ENCODE measurements at regions of chr7 and their contacts with region 1.

Region 1: GRCh38 chr7:106153891-106154449 is 41.9 kb upstream of the SYPL1 start:
- DNase-seq: peak; percentile 86
- H3K4me3 ChIP-seq: no peak overlapping the region; a peak in 1 of 4 replicates
- H3K27ac ChIP-seq: no peak overlapping the region
- H3K4me1 ChIP-seq: peaks cover 10 to 19% of the 10 kb centered on the region in 2 experiments; a peak in 2 of 4 replicates
- H3K27me3 ChIP-seq: no peaks in the 10 kb centered on the region; the same call in 1 of the 2 replicates
- CTCF ChIP-seq: peak; percentile 100
- EP300 ChIP-seq: no peak
- RAD21 ChIP-seq: peak; percentile 100

Region 2: GRCh38 chr7:105581066-105581842 is 572.7 kb before region 1 on chr7 and contains the start of gene EFCAB10:
- CTCF ChIA-PET with region 1: no interaction called
- POLR2A ChIA-PET with region 1: no interaction called
- DNase-seq: peak; percentile 98
- H3K4me3 ChIP-seq: peak within 1 kb of the TSS; percentile 55 to 61
- H3K27ac ChIP-seq: peak within 1 kb of the TSS in 1 of 2 experiments; percentile 56; a peak in 1 of 4 replicates
- H3K4me1 ChIP-seq: no peaks in the 10 kb centered on the region; a peak in 1 of 4 replicates
- H3K27me3 ChIP-seq: no peaks in the 10 kb centered on the region
- CTCF ChIP-seq: peak; percentile 27
- EP300 ChIP-seq: no peak
- RAD21 ChIP-seq: no peak
- polyA plus RNA-seq, gene EFCAB10: 0.51 and 0.80 TPM in 2 replicates

Region 3: GRCh38 chr7:106064771-106065585 is 89.0 kb before region 1 on chr7:
- CTCF ChIA-PET with region 1: interaction called, 593 read pairs
- POLR2A ChIA-PET with region 1: no interaction called
- DNase-seq: peak; percentile 82
- H3K4me3 ChIP-seq: peak overlapping the region; percentile 6 to 55; a peak in 3 of 4 replicates
- H3K27ac ChIP-seq: peak overlapping the region; percentile 87 to 88
- H3K4me1 ChIP-seq: peaks cover 28 to 60% of the 10 kb centered on the region in 2 experiments
- H3K27me3 ChIP-seq: no peaks in the 10 kb centered on the region
- CTCF ChIP-seq: peak; percentile 25; the same call in 1 of the 2 replicates
- EP300 ChIP-seq: peak in 1 of 2 experiments; percentile 59; a peak in 1 of 4 replicates
- RAD21 ChIP-seq: peak; percentile 27; the same call in 1 of the 2 replicates

Region 4: GRCh38 chr7:106082087-106082854 is 71.7 kb before region 1 on chr7:
- CTCF ChIA-PET with region 1: interaction called, 13 read pairs
- POLR2A ChIA-PET with region 1: no interaction called
- DNase-seq: no peak
- H3K4me3 ChIP-seq: no peak overlapping the region
- H3K27ac ChIP-seq: no peak overlapping the region
- H3K4me1 ChIP-seq: no peaks in the 10 kb centered on the region; a peak in 1 of 4 replicates
- H3K27me3 ChIP-seq: no peaks in the 10 kb centered on the region
- CTCF ChIP-seq: no peak
- EP300 ChIP-seq: no peak
- RAD21 ChIP-seq: no peak

Region 5: GRCh38 chr7:106112117-106112971 is 41.6 kb before region 1 on chr7 and contains the start of gene SYPL1:
- CTCF ChIA-PET with region 1: interaction called, 36 read pairs
- POLR2A ChIA-PET with region 1: interaction called, 6 read pairs
- DNase-seq: peak; percentile 99
- H3K4me3 ChIP-seq: peak within 1 kb of the TSS; percentile 80 to 91
- H3K27ac ChIP-seq: peak within 1 kb of the TSS; percentile 91 to 95
- H3K4me1 ChIP-seq: peaks cover 14 to 21% of the 10 kb centered on the region in 2 experiments; a peak in 3 of 4 replicates
- H3K27me3 ChIP-seq: no peaks in the 10 kb centered on the region
- CTCF ChIP-seq: peak; percentile 39
- EP300 ChIP-seq: no peak; a peak in 1 of 4 replicates
- RAD21 ChIP-seq: peak; percentile 9; the same call in 1 of the 2 replicates
- polyA plus RNA-seq, gene SYPL1: 72.4 and 98.7 TPM in 2 replicates

Region 6: GRCh38 chr7:106139265-106140251 is 14.4 kb before region 1 on chr7:
- CTCF ChIA-PET with region 1: interaction called, 24 read pairs
- POLR2A ChIA-PET with region 1: no interaction called
- DNase-seq: no peak
- H3K4me3 ChIP-seq: no peak overlapping the region
- H3K27ac ChIP-seq: no peak overlapping the region
- H3K4me1 ChIP-seq: peaks cover 0 to 7% of the 10 kb centered on the region in 2 experiments; a peak in 2 of 4 replicates
- H3K27me3 ChIP-seq: no peaks in the 10 kb centered on the region
- CTCF ChIP-seq: no peak
- EP300 ChIP-seq: no peak
- RAD21 ChIP-seq: no peak

Region 7: GRCh38 chr7:106201164-106201563 is 47.2 kb after region 1 on chr7:
- CTCF ChIA-PET with region 1: no interaction called
- POLR2A ChIA-PET with region 1: no interaction called
- DNase-seq: no peak
- H3K4me3 ChIP-seq: no peak overlapping the region
- H3K27ac ChIP-seq: no peak overlapping the region
- H3K4me1 ChIP-seq: peaks cover 0 to 6% of the 10 kb centered on the region in 2 experiments; a peak in 1 of 4 replicates
- H3K27me3 ChIP-seq: no peaks in the 10 kb centered on the region
- CTCF ChIP-seq: no peak
- EP300 ChIP-seq: no peak
- RAD21 ChIP-seq: no peak